Caco-2 (cell line): ENCODE measurements at regions of chr1 and their contacts with region 1.

Region 1: DNA sequence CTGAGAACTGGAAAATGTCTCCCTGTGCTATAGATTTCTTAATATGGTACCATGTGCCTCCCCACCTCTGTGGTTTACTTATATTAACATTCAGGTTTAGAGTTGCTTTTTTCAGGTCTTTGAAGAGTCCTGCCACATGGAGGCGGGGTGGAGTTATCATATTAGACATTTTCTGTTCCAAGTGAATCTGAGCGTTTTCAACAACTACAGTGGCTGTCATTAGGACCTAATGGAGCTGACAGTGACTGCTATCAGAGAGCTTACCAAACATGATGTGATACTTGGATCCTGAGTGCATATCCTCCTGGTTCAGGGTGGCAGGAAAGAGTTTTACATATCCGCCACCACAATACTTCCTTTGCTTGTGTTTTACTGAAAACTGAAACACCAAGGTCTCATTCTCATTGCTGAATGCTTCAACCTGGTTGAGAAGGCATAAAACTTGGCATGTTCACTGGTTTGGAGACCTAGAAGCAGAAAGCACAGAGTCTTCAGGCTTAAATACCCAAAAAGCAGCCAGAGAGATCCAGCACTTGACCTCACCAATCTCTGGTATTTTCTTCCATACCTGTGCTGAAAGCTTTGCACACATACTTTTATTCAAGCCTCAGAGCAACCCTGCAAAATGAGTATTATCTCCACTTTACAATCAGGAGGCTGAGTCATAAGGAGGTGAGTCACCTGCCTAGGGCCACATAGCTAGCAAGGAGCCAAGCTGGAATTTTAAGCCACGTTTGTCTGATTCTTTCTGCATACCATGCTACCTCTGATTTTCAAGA is 47.4 kb upstream of the OSBPL9 start:
- DNase-seq: peak; percentile 65 to 75
- H3K4me3 ChIP-seq: no peak overlapping the region
- H3K4me3 Mint-ChIP-seq: peak overlapping the region; percentile 50
- H3K27ac Mint-ChIP-seq: peak overlapping the region; percentile 98
- H3K4me1 ChIP-seq: peaks cover 38% of the 10 kb centered on the region
- H3K4me1 Mint-ChIP-seq: peaks cover 15% of the 10 kb centered on the region
- H3K27me3 ChIP-seq: no peaks in the 10 kb centered on the region
- H3K27me3 Mint-ChIP-seq: no peaks in the 10 kb centered on the region
- CTCF ChIP-seq: peak in 1 of 2 experiments; percentile 7

Region 2: GRCh38 chr1:51558360-51558924 is 11.0 kb before region 1 on chr1:
- CTCF ChIA-PET with region 1: no interaction called
- POLR2A ChIA-PET with region 1: no interaction called
- intact Hi-C with region 1: loop called (anchors 1 kb)
- DNase-seq: peak; percentile 42 to 43
- H3K4me3 ChIP-seq: no peak overlapping the region
- H3K4me3 Mint-ChIP-seq: peak overlapping the region; percentile 31
- H3K27ac Mint-ChIP-seq: peak overlapping the region; percentile 87
- H3K4me1 ChIP-seq: peaks cover 18% of the 10 kb centered on the region
- H3K4me1 Mint-ChIP-seq: peaks cover 20% of the 10 kb centered on the region
- H3K27me3 ChIP-seq: no peaks in the 10 kb centered on the region
- H3K27me3 Mint-ChIP-seq: no peaks in the 10 kb centered on the region
- CTCF ChIP-seq: no peak

Region 3: GRCh38 chr1:51616901-51617708 is 47.6 kb after region 1 on chr1 and contains the start of gene OSBPL9:
- CTCF ChIA-PET with region 1: no interaction called
- POLR2A ChIA-PET with region 1: no interaction called
- intact Hi-C with region 1: loop called (anchors 2 kb)
- DNase-seq: peak; percentile 78 to 86
- H3K4me3 ChIP-seq: peak within 1 kb of the TSS; percentile 94
- H3K4me3 Mint-ChIP-seq: peak within 1 kb of the TSS; percentile 93
- H3K27ac Mint-ChIP-seq: peak within 1 kb of the TSS; percentile 92
- H3K4me1 ChIP-seq: peaks cover 13% of the 10 kb centered on the region
- H3K4me1 Mint-ChIP-seq: peaks cover 22% of the 10 kb centered on the region
- H3K27me3 ChIP-seq: no peaks in the 10 kb centered on the region
- H3K27me3 Mint-ChIP-seq: no peaks in the 10 kb centered on the region
- CTCF ChIP-seq: no peak
- total RNA-seq, gene OSBPL9: 58.7 and 61.9 TPM in 2 replicates

Region 4: DNA sequence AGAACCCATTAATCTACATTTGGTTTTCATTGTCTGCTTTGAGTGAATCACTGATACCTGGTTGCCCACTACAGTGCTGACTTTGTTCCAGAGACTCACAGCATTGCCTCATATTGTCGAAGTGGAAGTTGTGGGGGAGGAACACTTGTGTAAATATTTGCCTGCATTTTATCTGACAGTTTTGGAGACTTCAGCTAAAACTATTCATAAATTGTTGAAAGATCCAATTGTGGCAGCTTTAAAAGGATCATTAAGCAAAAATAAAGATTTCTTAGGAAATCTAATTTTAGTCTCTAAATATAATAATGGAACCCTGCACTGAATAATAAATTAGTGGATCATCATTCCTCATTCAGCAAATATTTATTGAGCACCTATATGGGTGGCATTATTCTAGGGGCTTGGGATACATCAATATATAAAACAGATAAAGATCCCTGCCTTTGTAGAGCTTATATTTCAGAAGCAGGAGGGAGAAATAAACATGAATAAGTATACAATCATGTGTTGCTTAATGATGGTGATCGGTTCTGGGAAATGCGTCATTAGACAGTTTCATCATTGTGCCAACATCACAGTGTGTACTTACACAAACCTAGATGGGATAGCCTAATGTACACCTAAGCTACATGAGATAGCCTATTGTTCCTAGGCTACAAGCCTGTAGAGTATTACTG is 121.0 kb after region 1 on chr1:
- CTCF ChIA-PET with region 1: interaction called, 10 read pairs
- POLR2A ChIA-PET with region 1: no interaction called
- intact Hi-C with region 1: no loop called
- DNase-seq: peak in 1 of 2 experiments; percentile 27
- H3K4me3 ChIP-seq: no peak overlapping the region
- H3K4me3 Mint-ChIP-seq: no peak overlapping the region
- H3K27ac Mint-ChIP-seq: no peak overlapping the region
- H3K4me1 ChIP-seq: peaks cover 18% of the 10 kb centered on the region
- H3K4me1 Mint-ChIP-seq: peaks cover 8% of the 10 kb centered on the region
- H3K27me3 ChIP-seq: no peaks in the 10 kb centered on the region
- H3K27me3 Mint-ChIP-seq: no peaks in the 10 kb centered on the region
- CTCF ChIP-seq: no peak

Region 5: DNA sequence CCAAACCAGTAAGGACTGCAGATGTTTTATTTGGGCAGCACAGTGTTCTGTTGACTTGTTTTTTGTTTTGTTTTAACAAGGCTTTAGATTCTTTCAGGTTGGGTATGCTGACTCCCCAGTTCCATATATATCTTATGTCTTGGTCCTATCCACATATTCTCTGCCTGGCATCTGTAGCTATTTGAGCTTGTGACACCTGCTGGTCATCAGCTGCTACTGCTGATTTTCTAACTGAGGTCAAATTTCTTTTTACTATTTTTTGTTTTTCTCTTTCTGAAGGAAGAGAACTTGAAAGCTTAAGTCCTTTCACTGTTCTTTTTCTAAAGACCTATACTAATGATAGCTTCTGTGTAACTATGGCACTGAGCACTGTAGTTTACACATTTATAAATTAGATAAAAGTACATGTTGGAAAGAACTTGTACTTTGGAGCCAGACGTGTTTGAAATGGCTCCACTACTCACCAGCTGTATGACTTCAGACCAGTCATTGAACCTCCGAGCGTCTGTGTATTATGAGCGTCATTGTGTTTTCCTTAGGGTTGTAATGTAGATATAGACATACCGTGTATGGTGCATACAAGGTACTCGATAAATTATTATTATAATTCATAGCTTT is 199.6 kb after region 1 on chr1:
- CTCF ChIA-PET with region 1: interaction called, 5 read pairs
- POLR2A ChIA-PET with region 1: no interaction called
- intact Hi-C with region 1: loop called (anchors 1 kb)
- DNase-seq: peak in 1 of 2 experiments; percentile 18
- H3K4me3 ChIP-seq: no peak overlapping the region
- H3K4me3 Mint-ChIP-seq: no peak overlapping the region
- H3K27ac Mint-ChIP-seq: no peak overlapping the region
- H3K4me1 ChIP-seq: no peaks in the 10 kb centered on the region
- H3K4me1 Mint-ChIP-seq: peaks cover 6% of the 10 kb centered on the region
- H3K27me3 ChIP-seq: no peaks in the 10 kb centered on the region
- H3K27me3 Mint-ChIP-seq: no peaks in the 10 kb centered on the region
- CTCF ChIP-seq: peak; percentile 49 to 63